Endothelial cell of umbilical vein (primary cell): ENCODE measurements at regions of chr4 and their contacts with region 1.

Region 1: DNA sequence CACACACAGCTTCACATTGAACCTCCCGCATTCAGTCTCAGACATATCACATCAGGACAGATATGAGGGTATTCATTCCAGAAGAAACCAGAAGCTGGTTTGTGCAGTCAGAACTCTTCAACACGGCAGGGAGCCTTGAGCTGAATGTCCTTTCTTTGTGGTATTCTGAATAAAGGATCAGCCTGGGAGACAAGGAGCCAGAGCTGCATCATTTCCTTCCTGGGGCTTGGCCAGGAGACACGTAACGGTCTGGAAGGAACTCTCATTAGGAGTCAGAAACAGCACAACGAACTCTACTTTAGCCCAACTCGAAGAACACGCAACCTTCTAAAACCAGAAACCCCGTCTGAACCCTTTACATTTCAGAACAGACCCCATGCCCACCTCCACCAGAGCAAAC is 46.4 kb downstream of the KDR start:
- DNase-seq: peak; percentile 92
- H3K4me3 ChIP-seq: peak overlapping the region in 1 of 3 experiments; percentile 28
- H3K27ac ChIP-seq: peak overlapping the region; percentile 99
- H3K4me1 ChIP-seq: peaks cover 48% of the 10 kb centered on the region
- H3K27me3 ChIP-seq: no peaks in the 10 kb centered on the region
- CTCF ChIP-seq: no peak
- POLR2A ChIP-seq: peak; percentile 79

Region 2: DNA sequence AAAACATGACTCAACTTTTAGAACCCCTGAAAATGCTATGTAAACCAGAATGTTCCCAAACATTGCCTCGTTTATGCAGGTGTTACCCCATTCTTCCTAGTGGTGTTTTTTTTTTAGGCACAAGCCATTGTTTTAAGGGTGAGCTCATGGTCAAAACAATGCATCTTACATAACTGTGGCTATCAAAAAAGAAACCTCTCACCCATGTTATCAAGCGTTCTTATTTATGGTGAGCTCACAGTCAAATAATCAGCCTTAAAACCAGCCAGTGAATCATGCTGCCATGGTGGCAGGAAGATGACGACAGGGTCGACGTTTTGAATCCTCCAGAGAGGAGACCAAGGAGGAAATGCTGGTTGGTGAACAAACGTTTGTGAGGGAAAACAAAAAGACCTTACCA is 148.8 kb before region 1 on chr4:
- CTCF ChIA-PET with region 1: no interaction called
- POLR2A ChIA-PET with region 1: no interaction called
- dilution Hi-C with region 1: no loop called
- intact Hi-C with region 1: loop called (anchors 5 kb)
- DNase-seq: peak; percentile 99
- H3K4me3 ChIP-seq: peak overlapping the region in 1 of 3 experiments; percentile 28
- H3K27ac ChIP-seq: peak overlapping the region; percentile 99
- H3K4me1 ChIP-seq: peaks cover 33% of the 10 kb centered on the region
- H3K27me3 ChIP-seq: no peaks in the 10 kb centered on the region
- CTCF ChIP-seq: no peak
- POLR2A ChIP-seq: no peak

Region 3: DNA sequence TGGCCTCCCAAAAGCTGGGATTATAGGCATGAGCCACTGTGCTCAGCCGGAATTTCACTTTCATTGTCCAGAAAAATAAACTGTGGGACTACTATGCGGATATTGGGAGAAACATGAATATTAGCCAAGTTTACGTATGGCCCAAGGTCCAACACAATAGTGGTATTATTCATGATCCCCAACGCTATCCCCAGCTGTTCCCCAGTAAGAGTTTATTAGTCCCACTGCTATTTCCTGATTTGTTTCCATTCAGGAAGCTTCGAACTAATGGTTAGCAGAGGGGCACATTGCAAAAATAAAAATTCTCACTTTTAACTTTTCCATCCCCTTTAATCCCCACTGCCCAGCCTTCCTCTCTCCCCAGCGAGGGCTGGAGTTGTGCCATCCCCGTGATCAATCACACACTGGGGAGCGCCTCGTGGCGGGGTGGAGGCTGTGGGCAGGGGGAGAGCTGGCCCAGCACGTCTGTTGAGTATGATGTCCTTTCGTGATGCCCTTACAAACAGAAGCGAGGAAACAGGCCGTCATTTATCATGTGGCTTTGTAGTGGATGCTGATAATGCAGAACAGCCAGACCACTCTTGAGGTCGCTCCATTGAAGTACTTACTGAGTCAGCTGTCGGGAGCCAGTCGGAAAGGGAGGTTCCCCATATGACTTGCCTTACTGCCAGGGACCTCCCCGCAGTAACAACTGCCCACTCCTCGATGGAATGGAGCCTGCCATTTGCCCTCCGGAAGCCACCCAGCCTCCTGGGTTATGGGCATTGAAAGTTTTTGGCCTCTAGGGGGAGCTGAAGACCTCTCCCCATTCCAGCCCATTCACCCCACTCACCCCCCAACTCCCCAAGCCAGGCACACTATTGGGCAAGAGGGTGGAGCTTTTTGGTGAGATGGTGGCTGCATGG is 70.6 kb before region 1 on chr4:
- CTCF ChIA-PET with region 1: interaction called, 11 read pairs
- POLR2A ChIA-PET with region 1: interaction called, 3 read pairs
- dilution Hi-C with region 1: no loop called
- intact Hi-C with region 1: loop called (anchors 1 kb)
- DNase-seq: peak; percentile 94
- H3K4me3 ChIP-seq: no peak overlapping the region
- H3K27ac ChIP-seq: peak overlapping the region; percentile 21
- H3K4me1 ChIP-seq: peaks cover 11% of the 10 kb centered on the region
- H3K27me3 ChIP-seq: no peaks in the 10 kb centered on the region
- CTCF ChIP-seq: peak; percentile 41 to 57
- POLR2A ChIP-seq: no peak

Region 4: GRCh38 chr4:55175779-55176231 is 96.8 kb after region 1 on chr4:
- CTCF ChIA-PET with region 1: no interaction called
- POLR2A ChIA-PET with region 1: no interaction called
- dilution Hi-C with region 1: no loop called
- intact Hi-C with region 1: loop called (anchors 1 kb)
- DNase-seq: peak; percentile 66
- H3K4me3 ChIP-seq: peak overlapping the region in 1 of 3 experiments; percentile 39
- H3K27ac ChIP-seq: peak overlapping the region; percentile 91
- H3K4me1 ChIP-seq: peaks cover 72% of the 10 kb centered on the region
- H3K27me3 ChIP-seq: no peaks in the 10 kb centered on the region
- CTCF ChIP-seq: no peak
- POLR2A ChIP-seq: no peak